PC-3 (cell line): ENCODE measurements at regions of chr10 and their contacts with region 1.

Region 1: GRCh38 chr10:35126530-35127296 is at the start of gene CREM:
- DNase-seq: peak; percentile 100
- ATAC-seq: peak; percentile 80
- H3K4me3 ChIP-seq: peak within 1 kb of the TSS; percentile 74
- H3K27ac ChIP-seq: peak within 1 kb of the TSS; percentile 87
- H3K4me1 ChIP-seq: peaks cover 41% of the 10 kb centered on the region
- H3K27me3 ChIP-seq: no peaks in the 10 kb centered on the region
- CTCF ChIP-seq: peak; percentile 99
- total RNA-seq, gene CREM: 150 and 195 TPM in 2 replicates

Region 2: GRCh38 chr10:35043796-35044344 is 82.8 kb before region 1 on chr10:
- CTCF ChIA-PET with region 1: no interaction called
- POLR2A ChIA-PET with region 1: no interaction called
- intact Hi-C with region 1: no loop called
- DNase-seq: no peak
- ATAC-seq: no peak
- H3K4me3 ChIP-seq: no peak overlapping the region
- H3K27ac ChIP-seq: peak overlapping the region; percentile 49
- H3K4me1 ChIP-seq: peaks cover 46% of the 10 kb centered on the region
- H3K27me3 ChIP-seq: no peaks in the 10 kb centered on the region
- CTCF ChIP-seq: no peak

Region 3: GRCh38 chr10:35079763-35080162 is 47.0 kb before region 1 on chr10:
- CTCF ChIA-PET with region 1: no interaction called
- POLR2A ChIA-PET with region 1: no interaction called
- intact Hi-C with region 1: no loop called
- DNase-seq: peak; percentile 94
- ATAC-seq: peak; percentile 100
- H3K4me3 ChIP-seq: no peak overlapping the region
- H3K27ac ChIP-seq: no peak overlapping the region
- H3K4me1 ChIP-seq: peaks cover 9% of the 10 kb centered on the region
- H3K27me3 ChIP-seq: no peaks in the 10 kb centered on the region
- CTCF ChIP-seq: no peak

Region 4: DNA sequence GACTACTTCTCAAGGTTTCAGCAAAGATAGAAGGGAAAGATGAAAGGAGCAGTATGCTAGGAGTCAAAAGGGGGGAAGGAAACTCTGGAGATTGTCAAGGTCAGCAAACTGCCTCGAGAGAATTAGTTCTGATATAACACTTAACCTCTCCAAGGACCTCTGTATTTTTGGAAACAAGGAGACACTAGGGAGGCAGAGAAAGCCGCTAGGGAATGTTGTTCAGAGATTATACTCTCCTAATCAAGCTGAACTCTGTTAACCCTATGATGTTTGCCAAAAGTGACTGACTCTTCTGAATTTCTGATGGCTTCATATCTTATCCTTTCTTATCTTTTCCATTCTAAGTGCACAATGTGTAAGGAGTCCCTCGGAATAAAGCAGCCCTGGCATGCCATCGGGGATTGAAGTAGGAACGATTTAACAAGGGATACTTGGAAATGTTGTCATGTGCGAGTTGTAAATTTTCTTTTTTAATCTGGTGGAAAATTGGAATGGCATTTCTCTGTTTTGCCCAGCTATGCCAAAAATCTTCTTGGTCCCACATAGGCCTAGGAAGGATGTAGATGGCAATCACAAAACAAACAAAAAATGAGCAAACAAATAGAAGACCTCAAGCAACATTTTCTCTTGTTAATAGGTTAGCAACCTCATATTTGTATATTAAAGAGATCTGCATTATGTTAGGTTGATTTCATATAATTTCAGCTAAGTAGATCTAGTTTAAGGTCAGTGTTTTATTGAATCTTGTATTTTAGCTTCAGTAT is 27.2 kb after region 1 on chr10:
- CTCF ChIA-PET with region 1: no interaction called
- POLR2A ChIA-PET with region 1: interaction called, 3 read pairs
- intact Hi-C with region 1: loop called (anchors 1 kb)
- DNase-seq: no peak
- ATAC-seq: peak; percentile 85
- H3K4me3 ChIP-seq: no peak overlapping the region
- H3K27ac ChIP-seq: no peak overlapping the region
- H3K4me1 ChIP-seq: peaks cover 5% of the 10 kb centered on the region; the same call in 1 of the 2 replicates
- H3K27me3 ChIP-seq: no peaks in the 10 kb centered on the region
- CTCF ChIP-seq: no peak

Region 5: DNA sequence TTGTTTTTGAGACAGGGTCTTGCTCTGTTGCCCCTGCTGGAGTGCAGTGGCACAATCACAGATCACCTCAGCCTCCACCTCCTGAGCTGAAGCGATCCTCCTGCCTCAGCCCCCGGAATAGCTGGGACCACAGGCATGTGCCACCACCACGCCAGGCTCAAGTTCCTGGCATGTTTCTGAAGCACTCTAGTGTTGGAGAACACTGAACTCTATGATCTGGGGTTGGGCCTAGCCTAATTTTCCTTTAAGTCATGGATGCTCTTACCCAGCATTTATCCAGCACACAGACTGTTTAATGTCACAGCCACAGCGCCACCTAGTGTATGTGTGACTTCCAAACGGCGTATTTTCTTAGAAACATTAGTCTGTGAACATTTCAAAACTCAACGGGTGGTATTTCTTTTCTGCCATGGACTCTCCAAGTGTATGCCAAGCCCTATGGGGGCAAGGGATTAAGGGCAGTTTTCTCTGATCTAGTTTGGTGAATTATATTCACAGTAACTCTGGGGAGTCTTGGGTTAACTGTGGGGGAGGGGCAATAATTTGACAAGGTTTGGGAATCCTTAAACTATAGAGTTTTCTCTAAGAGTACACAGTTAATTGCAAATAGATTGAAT is 91.7 kb after region 1 on chr10:
- CTCF ChIA-PET with region 1: interaction called, 18 read pairs
- POLR2A ChIA-PET with region 1: interaction called, 3 read pairs
- intact Hi-C with region 1: loop called (anchors 1 kb)
- DNase-seq: peak; percentile 100
- ATAC-seq: peak; percentile 86
- H3K4me3 ChIP-seq: peak overlapping the region; percentile 5; the same call in 1 of the 2 replicates
- H3K27ac ChIP-seq: no peak overlapping the region
- H3K4me1 ChIP-seq: no peaks in the 10 kb centered on the region
- H3K27me3 ChIP-seq: no peaks in the 10 kb centered on the region
- CTCF ChIP-seq: peak; percentile 100

Region 6: DNA sequence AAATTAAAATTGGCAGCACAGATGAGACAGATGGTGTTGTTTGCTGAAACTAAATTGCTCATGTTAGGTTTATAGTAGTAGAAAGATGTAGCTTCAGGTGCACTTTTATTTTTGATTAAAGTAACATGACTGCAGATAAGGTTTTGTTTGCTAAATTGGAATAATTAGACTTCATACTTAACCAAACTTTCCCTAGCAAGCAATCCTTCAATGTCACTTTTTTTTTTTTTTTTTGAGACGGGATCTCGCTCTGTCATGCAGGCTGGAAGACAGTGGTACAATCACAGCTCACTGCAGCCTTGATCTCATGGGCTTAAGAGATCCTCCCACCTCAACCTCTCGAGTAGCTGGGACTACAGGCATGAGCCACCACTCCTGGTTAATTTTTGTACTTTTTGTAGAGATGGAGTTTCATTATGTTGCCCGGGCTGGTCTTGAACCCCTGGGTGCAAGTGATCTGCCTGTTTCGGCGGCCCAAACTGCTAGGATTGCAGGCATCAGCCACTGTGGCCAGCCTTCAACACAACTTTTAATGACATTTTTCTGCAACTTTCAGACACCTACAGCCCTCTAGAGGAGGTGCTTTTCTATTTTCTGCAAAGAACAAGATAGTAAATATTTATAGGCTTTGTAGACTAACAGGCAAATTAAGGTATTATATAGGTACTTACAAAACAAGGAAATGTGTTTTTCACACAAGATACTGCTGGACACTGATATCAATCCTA is 124.8 kb after region 1 on chr10:
- CTCF ChIA-PET with region 1: no interaction called
- POLR2A ChIA-PET with region 1: interaction called, 17 read pairs
- intact Hi-C with region 1: no loop called
- DNase-seq: no peak
- ATAC-seq: peak; percentile 52
- H3K4me3 ChIP-seq: no peak overlapping the region
- H3K27ac ChIP-seq: 0 out of 2 replicates have a peak overlapping the region, but pooled peaks have one; percentile 0
- H3K4me1 ChIP-seq: peaks cover 22% of the 10 kb centered on the region
- H3K27me3 ChIP-seq: no peaks in the 10 kb centered on the region
- CTCF ChIP-seq: peak; percentile 53

Region 7: DNA sequence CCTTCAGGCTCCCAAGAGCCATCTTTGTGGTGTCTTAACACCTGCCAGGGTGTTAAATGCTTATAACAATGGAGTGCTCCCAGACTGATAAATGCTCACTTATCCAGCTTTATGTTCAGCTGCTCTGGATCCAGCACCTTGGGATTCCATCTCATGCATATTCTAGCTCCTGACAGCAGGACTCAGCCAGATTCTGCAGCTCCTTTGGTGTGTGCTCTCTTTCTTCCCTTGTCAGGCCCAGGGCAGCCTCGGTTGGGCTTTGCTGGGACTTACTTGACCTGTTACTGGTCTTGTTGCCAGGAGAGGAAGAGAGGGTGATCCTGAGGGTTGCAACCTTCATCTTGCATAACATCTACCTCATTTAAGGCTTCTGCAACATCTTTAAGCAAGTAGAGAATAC is 150.2 kb after region 1 on chr10:
- CTCF ChIA-PET with region 1: no interaction called
- POLR2A ChIA-PET with region 1: no interaction called
- intact Hi-C with region 1: no loop called
- DNase-seq: no peak
- ATAC-seq: peak; percentile 13; the same call in 1 of the 2 replicates
- H3K4me3 ChIP-seq: no peak overlapping the region
- H3K27ac ChIP-seq: no peak overlapping the region
- H3K4me1 ChIP-seq: no peaks in the 10 kb centered on the region
- H3K27me3 ChIP-seq: no peaks in the 10 kb centered on the region
- CTCF ChIP-seq: no peak

Region 8: GRCh38 chr10:36880898-36881297 is 1754.2 kb after region 1 on chr10:
- CTCF ChIA-PET with region 1: no interaction called
- POLR2A ChIA-PET with region 1: no interaction called
- intact Hi-C with region 1: loop called (anchors 5 kb)
- DNase-seq: peak; percentile 93
- ATAC-seq: peak; percentile 86
- H3K4me3 ChIP-seq: no peak overlapping the region
- H3K27ac ChIP-seq: no peak overlapping the region
- H3K4me1 ChIP-seq: no peaks in the 10 kb centered on the region
- H3K27me3 ChIP-seq: 0 out of 2 replicates have a peak, but pooled peaks cover 3% of the 10 kb centered on the region
- CTCF ChIP-seq: peak; percentile 86